ENCODE measurements at regions of chr6 and their contacts with region 1.

Region 1: DNA sequence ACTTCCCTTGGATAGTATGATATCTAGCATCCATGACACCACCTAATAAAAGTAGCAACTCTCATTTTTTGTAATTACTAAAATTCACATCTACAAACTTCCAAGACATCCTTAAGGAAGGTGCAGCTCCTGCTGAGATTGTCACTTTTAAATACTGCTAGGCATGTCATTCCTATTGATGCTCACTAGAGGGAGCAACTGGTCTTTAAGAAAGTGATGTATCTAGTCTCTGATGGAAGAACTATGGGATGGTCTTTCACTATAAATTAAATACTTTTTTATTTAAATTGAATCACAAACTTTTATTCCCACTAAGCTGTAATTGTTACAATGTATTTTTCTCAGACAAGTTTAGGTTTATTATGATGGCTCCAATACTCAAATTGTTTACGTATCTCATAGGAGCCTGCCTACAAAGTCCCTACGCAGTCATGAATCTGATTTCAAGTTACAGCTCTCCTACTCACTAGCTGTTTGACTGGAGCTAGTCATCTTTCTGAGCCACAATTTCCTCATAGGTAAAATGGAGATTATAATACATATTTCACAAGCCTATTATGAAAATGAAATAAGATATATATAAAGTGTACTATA is 8.1 kb upstream of the TSPYL1 start:
- DNase-seq: no peak
- H3K4me3 ChIP-seq: no peak overlapping the region
- CTCF ChIP-seq: peak; percentile 69

Region 2: DNA sequence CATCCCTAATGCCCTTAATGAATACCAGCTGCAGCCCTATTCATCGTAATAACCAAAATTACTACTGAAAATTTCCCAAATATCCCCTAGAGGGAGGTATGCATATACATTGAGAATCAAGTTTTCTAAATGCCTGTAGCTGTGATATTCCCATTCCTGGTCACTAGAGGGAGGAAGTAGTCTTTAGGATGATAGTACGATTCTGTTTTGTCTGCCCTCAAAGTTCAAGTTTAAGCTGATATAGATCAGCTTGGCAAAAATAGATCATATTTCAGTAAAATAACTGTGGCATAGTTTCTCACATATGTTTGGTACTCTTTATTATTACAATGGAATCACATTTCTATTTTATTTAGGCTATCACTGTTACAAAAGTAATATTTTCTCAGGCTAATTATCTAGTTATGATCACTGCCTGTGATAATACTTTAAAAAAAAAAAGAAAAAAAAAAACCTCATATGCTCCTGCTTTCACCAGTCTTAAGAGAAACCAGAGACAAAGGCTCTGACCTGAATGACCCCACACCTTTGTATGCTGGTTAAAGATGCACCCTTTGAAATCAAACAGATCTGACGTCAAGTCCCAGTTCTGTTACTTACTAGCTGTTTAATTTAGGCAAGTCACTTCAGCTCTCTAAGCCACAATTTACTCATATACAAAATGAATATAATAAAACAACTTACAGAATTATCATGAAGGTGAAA is 19.0 kb before region 1 on chr6:
- CTCF ChIA-PET with region 1: interaction called, 41 read pairs
- POLR2A ChIA-PET with region 1: no interaction called
- DNase-seq: peak; percentile 42
- H3K4me3 ChIP-seq: no peak overlapping the region
- CTCF ChIP-seq: peak; percentile 74

Region 3: GRCh38 chr6:116314878-116315277 is 27.1 kb after region 1 on chr6:
- CTCF ChIA-PET with region 1: interaction called, 13 read pairs
- POLR2A ChIA-PET with region 1: no interaction called
- DNase-seq: no peak
- H3K4me3 ChIP-seq: no peak overlapping the region
- CTCF ChIP-seq: no peak

Region 4: DNA sequence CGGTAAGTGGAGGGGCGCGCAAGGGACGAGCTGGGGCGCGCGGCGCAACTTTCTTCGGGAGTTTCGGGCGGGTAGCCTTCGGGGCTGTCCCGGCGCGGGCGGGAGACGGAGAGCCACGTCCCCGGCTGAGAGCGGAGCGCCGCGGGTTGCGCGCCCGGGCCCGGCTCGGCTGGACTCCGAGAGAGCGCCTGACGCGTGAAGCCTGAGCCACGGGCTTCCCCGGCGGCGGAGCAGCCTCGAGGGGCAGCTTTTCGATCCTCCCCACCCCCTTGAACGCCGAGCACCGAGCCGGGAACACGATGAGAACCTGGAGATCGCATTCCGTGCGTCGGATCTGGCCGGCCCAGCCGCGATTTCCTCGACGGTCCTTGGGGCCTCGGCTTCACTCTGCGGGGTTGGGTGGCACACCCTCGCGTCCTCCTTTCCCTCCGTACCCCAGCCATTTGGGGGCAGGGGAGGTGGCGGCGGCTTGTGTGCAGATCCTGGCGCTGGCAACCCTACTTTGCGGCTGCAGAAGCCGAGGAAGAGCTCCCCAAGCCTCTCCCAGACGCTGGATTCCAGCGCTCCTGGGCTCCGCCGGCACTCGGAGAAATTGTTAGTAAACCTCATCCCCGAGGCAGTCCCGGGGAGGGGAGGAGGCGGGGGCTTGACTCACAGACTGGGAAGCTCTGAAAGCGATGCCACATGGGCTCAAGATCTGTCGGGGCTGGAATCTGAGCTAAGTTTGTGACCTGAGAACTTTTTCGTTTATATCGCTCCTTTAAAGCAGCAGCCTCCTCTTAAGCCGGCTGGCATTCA is 83.5 kb after region 1 on chr6:
- CTCF ChIA-PET with region 1: interaction called, 8 read pairs
- POLR2A ChIA-PET with region 1: interaction called, 12 read pairs
- DNase-seq: no peak
- H3K4me3 ChIP-seq: peak overlapping the region; percentile 92
- CTCF ChIP-seq: no peak

Region 5: GRCh38 chr6:116409756-116410155 is 122.0 kb after region 1 on chr6:
- CTCF ChIA-PET with region 1: interaction called, 49 read pairs
- POLR2A ChIA-PET with region 1: no interaction called
- DNase-seq: no peak
- H3K4me3 ChIP-seq: no peak overlapping the region
- CTCF ChIP-seq: no peak

Region 6: GRCh38 chr6:116444092-116444491 is 156.3 kb after region 1 on chr6:
- CTCF ChIA-PET with region 1: interaction called, 49 read pairs
- POLR2A ChIA-PET with region 1: no interaction called
- DNase-seq: no peak
- H3K4me3 ChIP-seq: no peak overlapping the region
- CTCF ChIP-seq: peak; percentile 56

Region 7: GRCh38 chr6:116561377-116562018 is 273.7 kb after region 1 on chr6:
- CTCF ChIA-PET with region 1: interaction called, 97 read pairs
- POLR2A ChIA-PET with region 1: no interaction called
- DNase-seq: no peak
- H3K4me3 ChIP-seq: no peak overlapping the region
- CTCF ChIP-seq: peak; percentile 70